ENCODE measurements at regions of chr12 and their contacts with region 1.

Region 1: DNA sequence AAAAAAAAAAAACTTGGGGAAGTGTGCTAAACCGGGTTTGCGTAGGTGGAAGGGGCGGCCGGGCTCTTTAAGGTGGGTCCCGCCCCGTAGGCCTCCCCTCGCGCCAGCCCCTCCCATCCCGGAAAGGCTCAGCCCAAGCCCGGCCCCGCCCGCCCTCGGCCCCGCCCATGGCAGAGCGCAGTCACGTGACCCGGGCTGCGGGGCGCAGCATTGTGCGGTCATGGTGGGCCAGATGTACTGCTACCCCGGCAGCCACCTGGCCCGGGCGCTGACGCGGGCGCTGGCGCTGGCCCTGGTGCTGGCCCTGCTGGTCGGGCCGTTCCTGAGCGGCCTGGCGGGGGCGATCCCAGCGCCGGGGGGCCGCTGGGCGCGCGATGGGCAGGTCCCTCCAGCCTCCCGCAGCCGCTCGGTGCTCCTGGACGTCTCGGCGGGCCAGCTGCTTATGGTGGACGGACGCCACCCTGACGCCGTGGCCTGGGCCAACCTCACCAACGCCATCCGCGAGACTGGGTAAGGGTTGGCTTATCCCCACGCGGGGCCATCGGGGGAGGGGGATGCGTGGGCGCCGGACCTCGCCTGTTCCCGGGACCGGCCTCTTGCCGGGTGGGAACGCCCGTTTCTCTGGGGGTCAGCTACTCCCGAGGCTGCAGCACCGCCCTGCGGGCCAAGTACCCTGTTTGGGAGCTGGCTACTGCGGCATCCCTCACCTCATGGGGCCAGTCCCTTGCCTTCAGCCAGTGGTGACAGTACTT is at the start of gene PLBD2:
- DNase-seq: peak; percentile 93
- ATAC-seq: peak; percentile 91
- H3K4me3 ChIP-seq: peak within 1 kb of the TSS; percentile 86
- H3K27ac ChIP-seq: peak within 1 kb of the TSS; percentile 13; the same call in 1 of the 2 replicates
- H3K4me1 ChIP-seq: peaks cover 12% of the 10 kb centered on the region
- H3K27me3 ChIP-seq: no peaks in the 10 kb centered on the region
- CTCF ChIP-seq: no peak
- total RNA-seq, gene PLBD2: 18.8 and 38.1 TPM in 2 replicates

Region 2: GRCh38 chr12:113310489-113310888 is 48.1 kb before region 1 on chr12:
- CTCF ChIA-PET with region 1: no interaction called
- POLR2A ChIA-PET with region 1: no interaction called
- intact Hi-C with region 1: loop called (anchors 1 kb)
- DNase-seq: peak; percentile 51
- ATAC-seq: no peak
- H3K4me3 ChIP-seq: no peak overlapping the region
- H3K27ac ChIP-seq: no peak overlapping the region
- H3K4me1 ChIP-seq: peaks cover 25% of the 10 kb centered on the region
- H3K27me3 ChIP-seq: no peaks in the 10 kb centered on the region
- CTCF ChIP-seq: peak; percentile 54